ENCODE measurements at regions of chr16 and their contacts with region 1.

Region 1: DNA sequence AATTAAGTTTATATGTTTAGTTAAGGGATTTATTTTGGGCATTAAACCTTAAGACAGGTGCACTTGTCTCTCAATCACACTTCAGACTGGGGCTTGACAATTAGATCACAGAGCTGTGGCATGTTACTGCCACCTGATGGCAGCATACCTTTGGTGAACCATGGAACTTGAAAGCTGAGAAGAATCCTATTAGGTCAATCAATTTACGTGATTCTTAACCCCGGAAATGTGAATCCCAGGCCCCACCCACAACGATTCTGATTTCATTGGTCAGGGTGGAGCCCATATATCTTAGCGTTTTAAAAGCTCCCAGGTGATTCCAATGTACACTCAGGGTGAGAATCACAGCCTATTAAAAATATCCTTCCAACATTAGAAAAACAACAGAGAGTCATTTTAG is 91.0 kb downstream of the GSG1L start:
- DNase-seq: no peak
- ATAC-seq: no peak
- H3K4me3 ChIP-seq: no peak overlapping the region
- H3K27ac ChIP-seq: no peak overlapping the region
- H3K4me1 ChIP-seq: no peaks in the 10 kb centered on the region
- H3K27me3 ChIP-seq: peaks cover 0 to 4% (median 0%) of the 10 kb centered on the region in 3 donors
- CTCF ChIP-seq: no peak
- POLR2A ChIP-seq: no peak

Region 2: GRCh38 chr16:27461483-27462171 is 510.9 kb before region 1 on chr16:
- in situ Hi-C with region 1: no loop called
- intact Hi-C with region 1: no loop called
- DNase-seq: peak in 1 of 2 donors; percentile 74
- ATAC-seq: peak; percentile 12 to 59
- H3K4me3 ChIP-seq: no peak overlapping the region
- H3K27ac ChIP-seq: peak overlapping the region; percentile 59 to 82 (median 74)
- H3K4me1 ChIP-seq: peaks cover 28 to 34% of the 10 kb centered on the region in 2 donors
- H3K27me3 ChIP-seq: no peaks in the 10 kb centered on the region
- CTCF ChIP-seq: no peak
- POLR2A ChIP-seq: no peak

Region 3: DNA sequence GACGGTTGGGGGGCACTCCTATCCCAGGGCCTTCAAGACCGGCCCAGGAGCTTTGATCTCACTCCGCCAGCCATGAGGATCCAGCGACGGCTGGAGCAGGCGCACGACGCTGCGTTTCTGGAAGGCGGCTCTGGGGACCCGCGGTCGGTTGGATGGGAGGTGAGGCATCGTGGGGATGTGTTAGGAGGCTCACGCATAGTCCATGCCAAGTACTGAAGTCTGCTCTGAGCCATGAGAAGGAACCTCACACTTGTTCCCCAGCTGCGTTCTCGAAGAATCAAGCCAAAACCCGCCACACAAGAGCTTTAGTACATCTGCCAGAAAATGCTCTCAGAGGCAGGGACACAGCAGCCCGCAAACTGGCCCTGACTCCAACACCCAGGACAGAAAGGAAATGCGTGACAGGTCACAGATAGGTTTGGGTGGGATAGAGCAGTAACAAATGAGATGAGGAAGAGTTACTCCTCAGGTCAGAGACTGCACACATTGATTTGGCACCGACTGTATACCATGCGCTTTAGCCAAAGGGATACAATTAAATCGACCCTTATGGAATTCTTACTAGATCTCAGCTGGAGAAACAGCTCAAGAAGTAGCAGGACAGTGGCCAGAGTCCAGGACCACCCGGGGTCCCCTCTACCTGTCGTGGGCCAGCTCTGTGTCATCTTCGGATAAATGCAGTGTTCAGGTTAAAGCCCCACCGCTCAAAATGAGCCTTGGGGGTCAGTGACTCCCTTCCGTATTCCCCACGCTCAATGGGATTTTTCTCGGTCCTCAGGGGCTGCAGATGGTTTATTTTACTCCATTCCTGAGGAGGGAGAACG is 97.7 kb after region 1 on chr16:
- in situ Hi-C with region 1: no loop called
- intact Hi-C with region 1: loop called (anchors 1 kb)
- DNase-seq: no peak
- ATAC-seq: no peak
- H3K4me3 ChIP-seq: no peak overlapping the region
- H3K27ac ChIP-seq: no peak overlapping the region
- H3K4me1 ChIP-seq: peaks cover 6 to 7% of the 10 kb centered on the region in 2 donors
- H3K27me3 ChIP-seq: peaks cover 0 to 3% (median 0%) of the 10 kb centered on the region in 3 donors
- CTCF ChIP-seq: no peak
- POLR2A ChIP-seq: no peak